ENCODE measurements at regions of chr11 and their contacts with region 1.

Region 1: DNA sequence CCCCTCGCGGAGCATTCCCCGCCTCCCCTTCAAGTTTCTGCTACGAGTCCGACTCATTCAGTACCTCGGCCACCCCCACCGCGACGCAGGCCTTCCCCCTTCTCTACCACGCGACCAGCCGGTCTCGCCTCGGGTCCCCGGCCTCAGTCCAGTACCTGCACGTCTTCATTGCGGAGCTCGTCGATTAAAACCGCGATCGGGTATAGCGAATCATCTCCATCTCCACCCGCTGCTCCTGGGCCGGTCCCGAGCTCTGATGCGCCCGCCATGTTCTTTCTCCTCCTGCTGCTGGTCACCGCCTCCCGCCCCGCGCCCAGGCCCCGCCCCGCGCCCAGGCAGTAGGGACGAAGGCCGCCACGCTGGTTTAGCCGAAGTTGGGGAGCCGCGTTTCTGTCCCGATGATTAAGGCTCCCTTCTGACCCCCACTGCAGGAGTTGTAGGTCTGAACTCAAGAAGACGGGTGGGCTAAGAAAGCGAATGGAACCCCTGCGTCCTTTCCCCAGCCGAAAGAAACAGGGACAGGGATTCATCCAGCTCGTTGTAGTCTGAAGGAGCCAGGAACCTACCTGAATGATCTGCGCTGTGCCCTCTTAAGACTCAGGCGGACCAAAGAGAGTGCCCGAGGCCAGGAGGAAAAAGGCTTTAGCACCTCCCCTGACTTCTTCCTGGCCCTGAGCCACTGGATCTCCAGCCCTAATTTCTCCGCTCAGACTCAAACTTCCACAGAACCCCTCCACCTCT is at the start of gene PPP2R1B:
- DNase-seq: peak; percentile 84
- H3K4me3 Mint-ChIP-seq: peak within 1 kb of the TSS; percentile 85
- H3K27ac Mint-ChIP-seq: peak within 1 kb of the TSS; percentile 93
- H3K4me1 Mint-ChIP-seq: peaks cover 25% of the 10 kb centered on the region
- H3K27me3 Mint-ChIP-seq: no peaks in the 10 kb centered on the region
- CTCF ChIP-seq: no peak
- total RNA-seq, gene PPP2R1B: 27.3 and 35.7 TPM in 2 replicates

Region 2: GRCh38 chr11:111652184-111652583 is 114.1 kb before region 1 on chr11:
- CTCF ChIA-PET with region 1: no interaction called
- POLR2A ChIA-PET with region 1: interaction called, 14 read pairs
- intact Hi-C with region 1: no loop called
- DNase-seq: no peak
- H3K4me3 Mint-ChIP-seq: no peak overlapping the region
- H3K27ac Mint-ChIP-seq: no peak overlapping the region
- H3K4me1 Mint-ChIP-seq: peaks cover 7% of the 10 kb centered on the region
- H3K27me3 Mint-ChIP-seq: no peaks in the 10 kb centered on the region
- CTCF ChIP-seq: no peak

Region 3: DNA sequence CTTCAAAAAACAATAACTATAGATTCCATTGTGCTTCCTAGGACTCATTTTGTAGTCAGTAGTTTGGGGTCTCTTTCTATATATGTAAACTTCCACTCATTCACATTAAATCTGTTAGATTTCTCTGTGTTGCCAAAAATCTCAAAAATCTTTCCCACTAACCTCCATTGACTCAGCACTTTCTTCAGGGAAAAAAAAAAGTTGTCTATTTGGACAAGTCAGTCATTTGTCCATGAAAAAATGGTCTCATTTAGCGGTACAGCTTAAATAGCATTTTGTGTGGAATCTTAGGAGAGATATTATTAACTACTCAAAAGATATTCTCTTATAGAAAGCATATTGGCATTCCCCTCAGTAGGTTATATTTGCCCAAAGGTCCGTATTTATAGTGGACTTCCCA is 82.0 kb before region 1 on chr11:
- CTCF ChIA-PET with region 1: no interaction called
- POLR2A ChIA-PET with region 1: no interaction called
- intact Hi-C with region 1: no loop called
- DNase-seq: no peak
- H3K4me3 Mint-ChIP-seq: no peak overlapping the region
- H3K27ac Mint-ChIP-seq: no peak overlapping the region
- H3K4me1 Mint-ChIP-seq: no peaks in the 10 kb centered on the region
- H3K27me3 Mint-ChIP-seq: no peaks in the 10 kb centered on the region
- CTCF ChIP-seq: no peak

Region 4: DNA sequence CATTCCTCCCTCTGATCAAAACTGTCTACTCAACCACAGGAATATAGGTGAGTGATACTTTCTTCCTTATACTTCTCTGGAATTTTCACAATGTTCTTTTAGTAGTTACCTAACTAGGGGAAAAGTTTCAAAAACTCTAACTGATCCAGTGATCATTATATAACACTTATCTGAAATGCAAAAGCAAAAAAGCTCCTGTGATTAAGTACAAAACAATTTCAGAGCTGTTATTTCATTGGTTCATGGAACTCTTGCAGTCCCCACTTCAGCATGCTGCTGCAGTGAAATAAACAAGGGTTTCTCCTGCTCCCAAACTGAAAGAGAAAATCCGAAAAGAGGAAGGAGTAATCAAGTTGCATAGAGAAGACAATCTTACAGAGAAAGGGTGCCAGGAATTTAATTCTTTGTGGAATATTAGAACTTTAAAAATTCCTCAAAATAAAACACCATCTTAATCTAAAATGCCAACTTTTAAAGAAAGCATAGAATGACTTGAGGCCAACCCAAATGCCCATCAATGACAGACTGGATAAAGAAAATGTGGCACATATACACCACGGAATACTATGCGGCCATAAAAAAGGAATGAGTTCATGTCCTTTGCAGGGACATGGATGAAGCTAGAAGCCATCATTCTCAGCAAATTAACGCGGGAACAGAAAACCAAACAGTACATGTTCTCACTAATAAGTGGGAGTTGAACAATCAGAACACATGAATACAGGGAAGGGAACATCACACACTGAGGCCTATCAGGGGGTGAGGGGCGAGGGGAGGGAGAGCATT is 20.4 kb before region 1 on chr11:
- CTCF ChIA-PET with region 1: interaction called, 4 read pairs
- POLR2A ChIA-PET with region 1: interaction called, 15 read pairs
- intact Hi-C with region 1: no loop called
- DNase-seq: no peak
- H3K4me3 Mint-ChIP-seq: peak overlapping the region; percentile 4
- H3K27ac Mint-ChIP-seq: peak overlapping the region; percentile 90
- H3K4me1 Mint-ChIP-seq: peaks cover 24% of the 10 kb centered on the region
- H3K27me3 Mint-ChIP-seq: no peaks in the 10 kb centered on the region
- CTCF ChIP-seq: no peak

Region 5: DNA sequence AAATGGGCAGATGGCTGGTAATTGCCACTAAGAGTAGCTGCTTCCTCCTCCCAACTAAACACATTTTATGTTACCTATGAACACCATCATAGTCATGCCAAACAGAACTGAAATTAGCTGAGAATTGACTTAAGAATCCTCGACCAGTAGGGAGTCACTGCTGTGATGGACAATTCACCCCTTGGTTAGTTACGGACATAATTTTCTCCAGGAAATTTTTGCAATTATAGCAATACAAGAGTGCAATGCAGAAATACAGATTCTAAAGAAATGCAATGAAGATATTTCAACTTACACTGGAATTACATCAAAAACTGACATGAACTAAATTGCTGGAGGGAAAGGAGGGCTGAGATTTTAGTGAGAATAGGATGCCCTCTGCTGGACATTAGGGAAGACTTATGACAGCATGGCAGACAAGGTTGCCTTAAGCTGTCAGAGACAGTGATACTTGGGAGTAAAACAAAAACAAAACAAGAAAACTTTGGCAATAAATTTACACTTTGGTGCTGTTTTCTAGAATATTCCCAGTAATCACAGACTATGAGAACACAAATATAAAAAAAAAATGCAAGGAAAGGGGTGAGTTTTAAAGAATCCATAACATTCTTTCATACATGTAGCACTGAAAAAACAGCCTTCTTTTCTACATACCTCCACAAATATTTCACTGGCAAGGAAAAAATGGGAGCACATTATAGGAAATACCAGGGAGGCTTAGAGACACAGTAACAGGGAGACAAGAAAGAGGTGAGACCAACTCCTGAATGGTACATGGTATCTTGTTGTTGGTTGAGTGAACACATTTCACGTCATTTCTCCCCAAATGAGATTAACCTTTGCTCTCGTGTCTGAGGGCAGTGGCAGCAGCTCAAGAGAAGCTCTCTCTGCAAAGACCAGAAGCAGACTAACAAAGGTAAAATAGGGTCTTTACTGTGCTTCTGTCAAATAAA is 11.1 kb after region 1 on chr11:
- CTCF ChIA-PET with region 1: interaction called, 29 read pairs
- POLR2A ChIA-PET with region 1: interaction called, 35 read pairs
- intact Hi-C with region 1: no loop called
- DNase-seq: peak; percentile 79
- H3K4me3 Mint-ChIP-seq: no peak overlapping the region
- H3K27ac Mint-ChIP-seq: no peak overlapping the region
- H3K4me1 Mint-ChIP-seq: no peaks in the 10 kb centered on the region
- H3K27me3 Mint-ChIP-seq: no peaks in the 10 kb centered on the region
- CTCF ChIP-seq: peak; percentile 54

Region 6: DNA sequence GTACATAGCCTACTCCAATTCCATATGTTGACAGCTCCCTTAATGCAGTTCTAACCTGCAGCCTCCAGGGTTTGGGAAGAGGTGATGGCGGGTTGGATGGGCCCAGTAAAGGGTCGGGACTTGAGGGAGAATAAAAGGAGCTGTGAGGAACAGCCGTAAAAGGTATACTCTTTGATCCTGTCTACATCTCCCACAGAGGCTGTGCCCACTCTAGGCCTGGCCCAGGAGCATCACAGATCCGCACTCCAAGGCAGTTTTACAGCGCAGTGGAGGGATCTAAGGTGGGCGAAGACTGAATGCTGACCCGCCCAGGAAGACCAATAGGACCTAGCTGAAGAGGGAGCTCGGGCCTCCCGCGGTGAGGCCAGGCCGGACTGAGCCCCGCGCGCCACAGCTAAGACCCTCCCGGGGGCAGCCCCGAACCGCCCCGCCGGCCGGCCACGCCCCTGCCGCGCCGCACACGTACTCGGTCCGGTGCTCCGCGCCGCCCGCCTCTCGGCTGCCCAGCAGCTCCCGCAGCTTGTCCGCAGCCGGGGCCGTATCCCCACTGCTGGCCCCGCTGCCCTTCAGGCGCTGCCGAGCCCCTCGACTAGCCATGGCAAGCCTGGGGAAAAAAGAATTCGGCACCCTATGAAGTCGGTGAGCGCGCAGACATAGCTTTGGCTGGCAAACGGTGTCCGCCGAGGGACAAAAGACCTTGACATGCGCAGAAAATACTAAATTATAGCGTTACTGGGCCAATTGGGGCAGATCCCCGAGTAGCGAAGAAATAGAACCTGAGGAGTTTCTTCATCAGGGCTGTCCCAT is 104.8 kb after region 1 on chr11 and contains the start of gene ALG9:
- CTCF ChIA-PET with region 1: no interaction called
- POLR2A ChIA-PET with region 1: interaction called, 12 read pairs
- intact Hi-C with region 1: no loop called
- DNase-seq: peak; percentile 82
- H3K4me3 Mint-ChIP-seq: peak within 1 kb of the TSS; percentile 96
- H3K27ac Mint-ChIP-seq: peak within 1 kb of the TSS; percentile 57
- H3K4me1 Mint-ChIP-seq: peaks cover 12% of the 10 kb centered on the region
- H3K27me3 Mint-ChIP-seq: no peaks in the 10 kb centered on the region
- CTCF ChIP-seq: peak; percentile 44
- total RNA-seq, gene ALG9: 28.8 and 31.2 TPM in 2 replicates

Measured in MCF 10A (cell line).